HCT116 (cell line): ENCODE measurements at regions of chr19 and their contacts with region 1.

Region 1: DNA sequence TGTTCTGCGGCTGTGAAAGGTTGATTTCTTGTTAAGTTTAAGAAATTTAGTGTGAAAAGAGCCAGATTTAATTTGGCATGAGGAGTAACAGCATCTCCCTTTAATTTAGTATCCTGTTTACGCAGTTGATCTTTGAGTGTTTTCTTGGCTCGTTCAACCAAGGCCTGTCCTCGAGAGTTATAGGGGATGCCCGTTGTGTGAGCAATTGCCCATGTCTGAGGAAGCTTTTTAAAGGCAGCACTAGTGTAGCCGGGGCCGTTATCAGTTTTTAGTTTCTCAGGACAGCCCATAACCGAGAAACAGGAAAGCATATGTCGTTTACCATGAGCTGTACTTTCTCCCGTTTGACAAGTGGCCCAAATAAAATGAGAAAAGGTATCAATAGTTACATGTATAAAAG is 47.5 kb upstream of the ZNF43 start:
- DNase-seq: no peak
- ATAC-seq: no peak
- H3K4me3 ChIP-seq: no peak overlapping the region
- H3K27ac ChIP-seq: no peak overlapping the region
- H3K4me1 ChIP-seq: no peaks in the 10 kb centered on the region
- H3K27me3 ChIP-seq: no peaks in the 10 kb centered on the region
- CTCF ChIP-seq: no peak
- POLR2A ChIP-seq: no peak
- RAD21 ChIP-seq: no peak

Region 2: DNA sequence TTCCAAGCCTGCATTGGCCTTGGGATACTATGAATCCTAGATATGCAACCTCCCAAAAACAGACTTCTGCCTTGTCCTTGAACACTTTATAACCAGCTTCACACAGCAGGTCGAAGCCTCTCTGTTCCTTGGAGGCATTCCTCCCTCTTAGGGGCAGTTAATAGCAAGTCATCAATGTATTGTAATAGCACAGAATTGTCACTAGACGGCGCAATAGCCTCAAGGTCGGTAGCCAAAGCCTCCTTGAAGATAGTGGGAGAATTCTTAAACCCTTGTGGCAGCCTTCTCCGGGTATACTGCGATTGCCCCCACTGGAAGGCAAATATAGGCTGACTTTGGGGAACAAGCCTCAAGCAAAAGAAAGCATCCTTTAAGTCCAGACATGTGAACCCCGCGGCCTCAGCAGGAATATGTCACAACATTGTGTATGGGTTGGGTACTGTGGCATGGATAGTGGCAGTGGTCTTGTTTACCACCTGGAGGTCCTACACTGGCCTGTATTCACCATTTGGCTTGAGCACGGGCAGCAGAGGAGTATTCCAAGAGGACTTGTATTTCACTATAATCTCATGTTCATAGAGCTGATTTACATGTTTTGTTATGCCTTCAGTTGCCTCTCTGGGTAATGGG is 680.5 kb before region 1 on chr19:
- CTCF ChIA-PET with region 1: no interaction called
- POLR2A ChIA-PET with region 1: no interaction called
- RAD21 ChIA-PET with region 1: no interaction called
- intact Hi-C with region 1: loop called (anchors 10 kb)
- DNase-seq: peak; percentile 32
- ATAC-seq: peak; percentile 74
- H3K4me3 ChIP-seq: no peak overlapping the region
- H3K27ac ChIP-seq: no peak overlapping the region
- H3K4me1 ChIP-seq: no peaks in the 10 kb centered on the region
- H3K27me3 ChIP-seq: no peaks in the 10 kb centered on the region
- CTCF ChIP-seq: peak; percentile 18 to 82 (median 78); a peak in 4 of 6 replicates
- POLR2A ChIP-seq: no peak
- RAD21 ChIP-seq: peak; percentile 58

Region 3: DNA sequence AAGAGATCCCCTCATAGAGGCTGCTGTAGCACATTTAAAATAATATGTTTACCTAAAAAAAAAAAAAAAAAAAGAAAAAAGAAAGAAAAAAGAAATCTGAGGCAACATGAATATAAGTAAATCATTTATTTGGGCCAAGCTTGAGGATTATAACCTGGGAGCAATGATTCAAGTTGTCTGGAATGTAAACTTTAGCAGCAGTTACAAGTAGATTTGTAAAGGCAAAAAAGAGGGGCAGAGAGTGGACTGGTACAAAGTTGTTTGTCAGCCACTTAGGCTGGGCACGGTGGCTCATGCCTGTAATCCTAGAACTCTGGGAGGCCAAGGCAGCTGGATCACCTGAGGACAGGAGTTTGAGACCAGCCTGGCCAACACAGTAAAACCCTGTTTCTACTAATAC is 58.8 kb before region 1 on chr19:
- CTCF ChIA-PET with region 1: no interaction called
- POLR2A ChIA-PET with region 1: no interaction called
- RAD21 ChIA-PET with region 1: no interaction called
- intact Hi-C with region 1: no loop called
- DNase-seq: no peak
- ATAC-seq: no peak
- H3K4me3 ChIP-seq: no peak overlapping the region
- H3K27ac ChIP-seq: no peak overlapping the region
- H3K4me1 ChIP-seq: no peaks in the 10 kb centered on the region
- H3K27me3 ChIP-seq: no peaks in the 10 kb centered on the region
- CTCF ChIP-seq: no peak
- POLR2A ChIP-seq: no peak
- RAD21 ChIP-seq: no peak

Region 4: DNA sequence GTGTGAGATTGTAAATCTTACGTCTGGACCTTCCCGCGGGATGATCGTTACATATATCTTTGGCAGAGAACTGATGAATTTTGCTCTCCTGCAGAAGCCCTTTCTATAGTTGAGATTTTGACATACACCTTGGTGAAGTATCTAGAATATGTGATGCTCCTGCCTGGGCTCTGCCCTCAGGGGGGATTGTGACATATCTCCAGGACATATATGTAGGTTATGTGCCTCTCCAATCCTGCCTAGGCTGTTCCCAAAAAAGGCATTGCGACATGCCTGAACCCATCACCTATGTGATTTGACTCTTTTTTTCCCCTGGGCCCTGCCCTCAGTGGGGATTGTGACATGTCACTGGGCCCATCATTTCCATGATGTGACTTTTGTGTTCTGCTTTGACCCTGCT is 50.6 kb after region 1 on chr19:
- CTCF ChIA-PET with region 1: no interaction called
- POLR2A ChIA-PET with region 1: no interaction called
- RAD21 ChIA-PET with region 1: no interaction called
- intact Hi-C with region 1: no loop called
- DNase-seq: no peak
- ATAC-seq: no peak
- H3K4me3 ChIP-seq: no peak overlapping the region
- H3K27ac ChIP-seq: no peak overlapping the region
- H3K4me1 ChIP-seq: no peaks in the 10 kb centered on the region
- H3K27me3 ChIP-seq: no peaks in the 10 kb centered on the region
- CTCF ChIP-seq: no peak
- POLR2A ChIP-seq: no peak
- RAD21 ChIP-seq: no peak